PC-9 (cell line): ENCODE measurements at regions of chr5 and their contacts with region 1.

Region 1: GRCh38 chr5:134275822-134276221 is 49.9 kb upstream of the PPP2CA start:
- DNase-seq: no peak
- H3K4me3 ChIP-seq: no peak overlapping the region
- H3K27ac ChIP-seq: no peak overlapping the region
- H3K4me1 ChIP-seq: peaks cover 23% of the 10 kb centered on the region
- H3K27me3 ChIP-seq: no peaks in the 10 kb centered on the region
- CTCF ChIP-seq: no peak

Region 2: DNA sequence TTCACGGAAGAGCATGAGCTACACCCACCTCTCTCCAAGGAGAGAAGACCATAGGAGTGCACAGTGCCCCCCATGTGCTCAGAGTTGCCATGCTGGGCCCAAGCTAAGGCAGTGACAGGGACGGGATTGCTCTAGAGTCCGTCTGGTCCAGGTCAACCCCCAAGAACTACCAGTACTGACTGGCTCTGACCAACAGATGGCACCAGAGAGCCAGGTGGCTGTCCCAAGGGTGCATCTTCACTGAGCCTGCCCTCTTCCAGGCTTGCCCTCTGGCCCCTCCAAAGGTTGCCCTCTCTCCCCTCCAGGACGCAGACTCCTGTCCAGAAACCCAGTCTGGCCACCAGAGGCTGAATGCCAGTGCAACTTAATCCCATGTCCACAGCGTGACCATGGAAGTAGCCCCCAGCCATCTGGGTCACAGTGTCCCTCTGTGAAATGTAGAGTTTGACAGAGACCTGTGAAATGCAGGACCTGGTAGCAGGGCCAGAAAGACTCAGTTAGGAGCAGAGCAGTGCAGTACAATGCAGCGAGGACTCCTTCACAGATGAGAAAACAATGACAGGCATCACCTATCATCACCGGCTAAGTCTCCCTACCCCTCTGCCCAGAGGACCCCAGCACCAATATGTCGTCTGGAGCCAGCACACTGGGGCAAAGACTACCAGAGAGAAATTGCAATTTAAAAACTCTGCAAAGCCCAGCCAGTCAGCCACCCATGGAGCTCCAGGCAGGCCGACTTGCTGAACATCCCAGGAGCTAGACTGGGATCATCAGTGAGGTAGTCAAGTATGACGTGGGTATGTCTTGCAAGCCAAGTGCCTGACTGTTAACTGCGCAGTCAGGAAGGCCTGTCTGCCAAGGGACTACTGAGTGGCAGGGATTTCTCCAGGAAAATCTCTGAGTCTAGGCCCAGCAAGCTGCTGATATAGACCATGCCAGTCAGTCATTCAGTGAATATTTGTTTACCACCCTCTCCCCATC is 91.4 kb before region 1 on chr5:
- CTCF ChIA-PET with region 1: no interaction called
- POLR2A ChIA-PET with region 1: interaction called, 28 read pairs
- intact Hi-C with region 1: no loop called
- DNase-seq: peak; percentile 39 to 65
- H3K4me3 ChIP-seq: no peak overlapping the region
- H3K27ac ChIP-seq: no peak overlapping the region
- H3K4me1 ChIP-seq: no peaks in the 10 kb centered on the region
- H3K27me3 ChIP-seq: no peaks in the 10 kb centered on the region
- CTCF ChIP-seq: peak; percentile 90

Region 3: DNA sequence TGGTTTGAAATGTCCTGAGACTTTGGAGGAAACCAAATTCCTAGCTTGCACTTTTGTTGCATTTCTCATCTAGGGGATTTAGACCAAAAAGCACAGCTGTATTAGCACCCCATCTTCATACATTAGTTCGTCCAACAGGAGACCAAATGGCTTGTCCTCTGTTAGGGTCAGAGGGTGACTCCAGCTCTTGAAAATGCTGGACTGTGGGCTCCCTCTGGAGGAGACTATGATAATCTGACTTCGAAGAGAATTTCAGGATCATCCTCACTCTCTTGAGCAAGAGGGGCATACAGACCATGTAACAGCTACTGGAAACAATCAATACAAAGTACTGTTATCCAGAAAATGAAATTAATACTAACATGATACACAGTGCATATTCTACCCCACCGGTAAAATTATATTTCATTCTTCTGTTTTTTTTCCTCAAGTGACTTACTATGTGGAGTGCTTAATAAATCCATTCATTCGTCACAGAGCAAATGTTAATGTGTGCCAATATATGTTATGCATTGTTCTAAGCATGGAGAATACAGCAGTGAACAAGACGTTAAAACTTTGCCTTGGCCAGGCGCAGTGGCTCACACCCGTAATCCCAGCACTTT is 13.8 kb after region 1 on chr5:
- CTCF ChIA-PET with region 1: interaction called, 11 read pairs
- POLR2A ChIA-PET with region 1: no interaction called
- intact Hi-C with region 1: no loop called
- DNase-seq: peak; percentile 48 to 74
- H3K4me3 ChIP-seq: no peak overlapping the region
- H3K27ac ChIP-seq: no peak overlapping the region
- H3K4me1 ChIP-seq: no peaks in the 10 kb centered on the region
- H3K27me3 ChIP-seq: no peaks in the 10 kb centered on the region
- CTCF ChIP-seq: peak; percentile 91